Activated CD4-positive, alpha-beta memory T cell treated with anti-CD3 and anti-CD28 coated beads for 36 hours (primary cell): ENCODE measurements at regions of chr17 and their contacts with region 1.

Region 1: DNA sequence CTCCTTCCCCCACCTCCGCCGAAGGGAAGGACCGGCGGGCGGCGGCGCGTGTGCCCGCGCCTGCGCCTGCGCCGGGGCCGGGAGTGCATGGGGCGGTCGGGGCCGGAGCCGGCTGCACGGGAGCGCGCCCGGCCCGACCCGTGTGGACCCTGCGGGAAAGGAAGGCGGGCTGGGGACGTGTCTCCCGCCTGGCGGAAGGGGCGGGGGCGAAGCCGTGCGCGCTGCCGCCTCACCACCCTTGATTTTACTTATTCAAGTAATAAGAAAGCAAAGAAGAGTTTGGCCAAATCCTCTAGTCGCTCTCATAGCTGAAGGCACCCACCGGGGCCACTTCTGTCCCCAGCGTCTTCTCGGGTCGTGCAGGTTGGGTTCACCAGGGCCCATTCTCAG is 596 bp upstream of the PFN1 start:
- DNase-seq: peak; percentile 85
- H3K4me3 Mint-ChIP-seq: peak overlapping the region; percentile 90
- H3K27ac Mint-ChIP-seq: peak overlapping the region; percentile 95
- H3K4me1 Mint-ChIP-seq: peaks cover 41% of the 10 kb centered on the region
- H3K27me3 Mint-ChIP-seq: no peaks in the 10 kb centered on the region

Region 2: GRCh38 chr17:4733073-4733531 is 215.8 kb before region 1 on chr17:
- CTCF ChIA-PET with region 1: no interaction called
- POLR2A ChIA-PET with region 1: no interaction called
- intact Hi-C with region 1: loop called (anchors 5 kb)
- DNase-seq: no peak
- H3K4me3 Mint-ChIP-seq: peak overlapping the region; percentile 20
- H3K27ac Mint-ChIP-seq: no peak overlapping the region
- H3K4me1 Mint-ChIP-seq: peaks cover 29% of the 10 kb centered on the region
- H3K27me3 Mint-ChIP-seq: peaks cover under 1% of the 10 kb centered on the region

Region 3: GRCh38 chr17:4967539-4968165 is 18.7 kb after region 1 on chr17 and contains the start of gene SPAG7:
- CTCF ChIA-PET with region 1: interaction called, 10 read pairs
- POLR2A ChIA-PET with region 1: interaction called, 346 read pairs
- intact Hi-C with region 1: loop called (anchors 1 kb)
- DNase-seq: peak; percentile 96
- H3K4me3 Mint-ChIP-seq: no peak within 1 kb of the TSS
- H3K27ac Mint-ChIP-seq: no peak within 1 kb of the TSS
- H3K4me1 Mint-ChIP-seq: peaks cover 37% of the 10 kb centered on the region
- H3K27me3 Mint-ChIP-seq: no peaks in the 10 kb centered on the region
- total RNA-seq, gene SPAG7: 60.6 to 65.8 TPM

Region 4: DNA sequence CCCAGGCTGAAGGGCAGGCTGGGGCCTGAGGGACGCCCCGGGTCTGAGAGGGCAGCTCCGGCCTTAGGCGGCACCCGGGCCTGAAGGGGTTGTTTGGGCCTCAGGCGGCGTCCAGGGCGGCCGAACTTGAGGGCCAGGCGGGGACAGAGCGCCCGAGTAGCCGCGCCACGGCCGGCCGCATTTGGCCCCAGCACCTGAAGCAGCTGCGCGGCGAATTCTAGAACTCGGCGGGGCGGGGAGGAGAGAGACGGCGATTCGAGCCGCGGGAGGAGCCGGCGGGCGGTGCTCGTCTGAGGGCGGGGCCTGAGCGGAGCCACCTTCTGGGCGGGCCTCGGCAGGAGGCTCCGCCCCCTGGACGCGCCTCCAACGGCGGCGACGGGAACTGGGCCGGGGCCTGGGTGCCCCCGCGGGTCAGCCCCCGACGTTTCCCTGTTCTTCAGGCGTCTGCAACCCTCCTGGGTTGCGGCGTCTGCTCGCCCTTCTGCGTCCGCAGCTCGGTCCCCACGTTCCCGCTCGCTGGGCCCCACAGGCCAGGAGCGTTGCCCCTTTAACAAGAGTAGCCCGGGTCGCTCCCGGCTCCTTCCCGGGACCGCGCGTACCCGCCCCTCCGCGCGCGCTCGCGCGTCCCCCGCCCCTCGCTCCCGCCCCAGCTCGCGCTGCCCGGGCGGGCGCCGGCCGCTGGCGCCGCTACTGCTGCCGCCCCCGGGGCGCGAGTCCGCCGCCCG is 48.5 kb after region 1 on chr17 and contains the starts of genes INCA1 and KIF1C:
- CTCF ChIA-PET with region 1: no interaction called
- POLR2A ChIA-PET with region 1: interaction called, 5 read pairs
- intact Hi-C with region 1: loop called (anchors 1 kb)
- DNase-seq: peak; percentile 93
- H3K4me3 Mint-ChIP-seq: peak within 1 kb of the TSS; percentile 82
- H3K27ac Mint-ChIP-seq: peak within 1 kb of the TSS; percentile 42
- H3K4me1 Mint-ChIP-seq: peaks cover 20% of the 10 kb centered on the region
- H3K27me3 Mint-ChIP-seq: no peaks in the 10 kb centered on the region
- total RNA-seq, gene INCA1: 0.40 TPM in 1 of 2 experiments, not detected in the other
- total RNA-seq, gene KIF1C: 43.9 to 48.8 TPM

Region 5: GRCh38 chr17:5486204-5487124 is 537.5 kb after region 1 on chr17 and contains the start of gene MIS12:
- CTCF ChIA-PET with region 1: no interaction called
- POLR2A ChIA-PET with region 1: no interaction called
- intact Hi-C with region 1: loop called (anchors 5 kb)
- DNase-seq: peak; percentile 99
- H3K4me3 Mint-ChIP-seq: peak within 1 kb of the TSS; percentile 88
- H3K27ac Mint-ChIP-seq: peak within 1 kb of the TSS; percentile 98
- H3K4me1 Mint-ChIP-seq: peaks cover 54% of the 10 kb centered on the region
- H3K27me3 Mint-ChIP-seq: no peaks in the 10 kb centered on the region
- total RNA-seq, gene MIS12: 30.4 to 32.0 TPM